ENCODE measurements at regions of chr11 and their contacts with region 1.

Region 1: GRCh38 chr11:59053387-59053786 is 32.7 kb upstream of the GLYATL1B start:
- DNase-seq: peak; percentile 90
- H3K4me3 ChIP-seq: no peak overlapping the region
- H3K27ac ChIP-seq: no peak overlapping the region
- H3K4me1 ChIP-seq: peaks cover 0 to 31% (median 10%) of the 10 kb centered on the region in 6 donors
- H3K27me3 ChIP-seq: peaks cover 0 to 5% (median 0%) of the 10 kb centered on the region in 7 donors
- CTCF ChIP-seq: peak in 9 of 11 experiments; percentile 33 to 79 (median 72)
- POLR2A ChIP-seq: no peak

Region 2: DNA sequence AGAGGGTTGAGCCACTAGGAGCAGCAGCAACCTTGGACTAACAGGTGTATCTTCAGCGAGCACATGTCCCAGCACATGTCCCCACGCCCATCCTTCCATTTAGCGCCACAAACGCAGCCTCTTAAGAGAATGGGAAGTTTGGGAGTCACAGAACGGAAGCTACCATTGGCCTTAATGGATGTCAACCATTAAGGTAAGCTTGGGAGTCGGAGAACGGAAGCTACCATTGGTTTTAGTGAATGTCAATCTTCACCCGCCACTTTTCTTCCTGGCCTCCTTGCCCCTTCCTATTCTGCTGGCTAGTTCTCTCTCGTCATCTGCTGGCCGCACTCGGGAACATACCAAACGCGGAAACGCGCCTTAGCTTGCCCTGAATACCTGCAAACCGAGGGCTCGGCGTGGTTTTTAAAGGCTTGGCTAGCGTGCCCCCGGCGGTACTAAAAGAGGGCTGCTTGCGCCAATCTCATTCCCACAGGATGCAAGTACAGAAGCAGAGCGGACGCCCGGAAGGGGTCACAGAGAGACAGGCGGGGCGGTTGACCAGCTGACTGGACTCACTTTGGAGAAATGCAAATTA is 89.8 kb before region 1 on chr11:
- intact Hi-C with region 1: loop called (anchors 5 kb)
- DNase-seq: no peak
- H3K4me3 ChIP-seq: no peak overlapping the region
- H3K27ac ChIP-seq: no peak overlapping the region
- H3K4me1 ChIP-seq: no peaks in the 10 kb centered on the region
- H3K27me3 ChIP-seq: peaks cover 0 to 13% (median 0%) of the 10 kb centered on the region in 7 donors
- CTCF ChIP-seq: no peak
- POLR2A ChIP-seq: no peak

Region 3: DNA sequence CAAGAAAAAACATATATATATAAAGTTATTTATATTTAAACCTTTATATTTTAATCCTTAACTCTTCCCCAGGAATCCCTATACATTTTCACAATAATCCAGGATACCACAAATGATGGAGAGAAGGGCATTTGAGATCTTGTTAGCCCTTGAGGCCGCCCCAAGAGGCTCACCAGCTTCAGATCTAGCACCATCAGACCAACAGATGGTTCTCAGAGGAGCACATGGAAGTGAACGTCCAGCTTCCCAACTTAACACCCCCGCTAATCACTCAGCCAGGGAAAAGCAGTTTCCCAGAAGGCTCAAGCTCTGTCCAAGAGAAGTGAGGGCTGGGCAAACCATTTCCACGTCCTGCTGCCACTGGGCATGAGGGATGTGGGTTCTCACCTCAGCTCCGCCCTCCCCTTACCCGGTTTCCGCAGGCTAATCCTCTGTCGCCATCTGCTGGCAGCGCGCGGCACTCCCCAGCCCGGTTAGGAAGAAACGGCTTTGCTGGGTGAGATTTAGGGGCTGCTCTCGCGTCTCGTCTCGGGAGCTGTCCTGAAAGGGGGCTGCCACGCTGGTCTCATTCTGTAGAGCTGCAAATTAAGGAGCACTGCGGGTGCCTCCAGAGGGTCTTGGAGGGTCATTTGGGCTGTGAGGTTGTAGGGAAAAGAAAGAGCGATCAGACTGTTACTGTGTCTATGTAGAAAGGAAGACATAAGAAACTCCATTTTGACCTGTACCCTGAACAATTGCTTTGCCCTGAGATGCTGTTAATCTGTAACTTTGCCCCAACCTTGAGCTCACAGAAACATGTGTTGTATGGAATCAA is 82.5 kb after region 1 on chr11:
- intact Hi-C with region 1: loop called (anchors 10 kb)
- DNase-seq: peak; percentile 97
- H3K4me3 ChIP-seq: peak overlapping the region in 1 of 8 donors; percentile 42
- H3K27ac ChIP-seq: peak overlapping the region in 3 of 8 donors; percentile 18 to 45 (median 24)
- H3K4me1 ChIP-seq: peaks cover 7 to 56% (median 12%) of the 10 kb centered on the region in 6 donors
- H3K27me3 ChIP-seq: no peaks in the 10 kb centered on the region
- CTCF ChIP-seq: peak; percentile 94 to 99 (median 97)
- POLR2A ChIP-seq: no peak

Measured in spleen (tissue), 13 donors.